HCT116 (cell line): ENCODE measurements at regions of chr1 and their contacts with region 1.

Region 1: DNA sequence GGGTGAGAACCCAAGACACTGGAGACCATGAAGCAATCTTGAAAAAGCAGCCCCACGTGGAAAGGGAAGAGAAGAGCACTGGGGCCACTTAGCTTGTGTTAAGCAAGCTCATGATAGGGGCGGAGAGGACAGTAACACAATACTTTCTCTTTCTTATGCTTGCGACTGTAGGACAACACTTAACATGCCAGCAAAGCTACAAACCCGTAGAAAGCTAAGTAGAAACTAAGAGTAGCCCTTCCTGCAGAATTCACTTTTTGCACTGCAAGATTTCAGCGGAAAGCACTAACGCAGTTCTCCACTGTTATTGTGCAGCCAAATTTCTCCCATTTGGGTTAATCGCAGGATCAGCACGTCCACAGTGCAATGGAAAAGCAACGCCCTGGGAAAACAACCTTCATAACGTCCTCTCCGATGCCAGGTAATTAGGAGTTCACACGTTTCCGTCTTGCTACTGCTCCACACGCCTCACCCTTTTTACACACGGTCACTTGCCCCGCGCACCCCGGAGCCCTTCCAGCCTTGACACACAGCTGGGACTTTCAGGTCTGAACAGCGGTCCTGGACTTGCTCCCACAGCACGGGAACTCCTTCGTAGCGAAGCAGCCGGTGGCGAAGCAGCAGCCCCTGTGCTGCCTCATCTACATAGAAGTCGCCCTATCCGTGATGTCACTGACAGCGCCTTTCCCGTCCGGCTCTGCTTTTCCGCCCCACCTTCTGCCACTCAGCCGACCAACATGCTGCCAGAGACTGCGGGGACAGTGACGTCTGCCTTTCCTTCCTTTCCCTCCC is 148.6 kb downstream of the PPIAL4G start:
- DNase-seq: peak; percentile 98
- ATAC-seq: peak; percentile 88
- H3K4me3 ChIP-seq: peak overlapping the region; percentile 50 to 56
- H3K27ac ChIP-seq: peak overlapping the region; percentile 89
- H3K4me1 ChIP-seq: peaks cover 9 to 27% of the 10 kb centered on the region in 2 experiments
- H3K27me3 ChIP-seq: no peaks in the 10 kb centered on the region
- CTCF ChIP-seq: no peak
- POLR2A ChIP-seq: peak; percentile 100
- RAD21 ChIP-seq: peak; percentile 41

Region 2: GRCh38 chr1:148263128-148263905 is 71.2 kb before region 1 on chr1:
- CTCF ChIA-PET with region 1: interaction called, 5 read pairs
- POLR2A ChIA-PET with region 1: interaction called, 366 read pairs
- RAD21 ChIA-PET with region 1: interaction called in 1 of 2 experiments, 3 read pairs
- intact Hi-C with region 1: loop called (anchors 1 kb)
- DNase-seq: peak; percentile 99
- ATAC-seq: peak; percentile 72
- H3K4me3 ChIP-seq: peak overlapping the region; percentile 41 to 59
- H3K27ac ChIP-seq: peak overlapping the region; percentile 78
- H3K4me1 ChIP-seq: peaks cover 4 to 33% of the 10 kb centered on the region in 2 experiments; a peak in 3 of 4 replicates
- H3K27me3 ChIP-seq: no peaks in the 10 kb centered on the region
- CTCF ChIP-seq: no peak
- POLR2A ChIP-seq: peak; percentile 100
- RAD21 ChIP-seq: peak; percentile 34; the same call in 1 of the 2 replicates

Region 3: DNA sequence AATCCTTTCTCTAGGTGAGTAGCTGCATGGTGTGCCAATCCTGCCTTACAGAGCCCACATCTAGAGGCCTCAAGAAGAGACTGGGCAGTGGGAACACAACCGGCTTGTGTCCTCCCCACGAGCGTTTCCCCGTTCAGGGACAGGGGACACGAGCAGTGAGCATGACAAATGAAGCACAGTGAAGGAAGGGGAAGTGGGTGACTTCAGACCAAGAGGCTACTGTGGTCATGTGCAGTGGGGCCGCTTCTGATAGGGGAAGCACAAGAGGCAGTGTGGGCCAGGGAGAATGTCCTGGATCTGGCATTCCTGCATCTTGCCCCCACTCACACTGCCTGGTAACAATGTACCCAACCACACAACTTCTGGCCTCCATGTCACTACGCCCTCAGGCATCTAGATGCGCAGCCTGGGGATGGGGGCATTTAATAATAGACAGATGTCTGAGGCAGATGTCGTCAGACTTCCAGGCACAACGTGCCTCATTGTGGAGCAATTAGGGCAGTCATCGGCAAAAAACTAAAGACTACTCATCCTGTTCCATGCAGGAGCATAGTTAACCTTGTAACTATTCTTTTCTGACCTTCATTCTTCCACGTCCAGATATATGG is 26.8 kb before region 1 on chr1:
- CTCF ChIA-PET with region 1: no interaction called
- POLR2A ChIA-PET with region 1: interaction called, 13 read pairs
- RAD21 ChIA-PET with region 1: no interaction called
- intact Hi-C with region 1: no loop called
- DNase-seq: no peak
- ATAC-seq: no peak
- H3K4me3 ChIP-seq: no peak overlapping the region
- H3K27ac ChIP-seq: no peak overlapping the region
- H3K4me1 ChIP-seq: peaks cover 0 to 8% of the 10 kb centered on the region in 2 experiments; a peak in 1 of 4 replicates
- H3K27me3 ChIP-seq: no peaks in the 10 kb centered on the region
- CTCF ChIP-seq: no peak
- POLR2A ChIP-seq: no peak
- RAD21 ChIP-seq: no peak

Region 4: DNA sequence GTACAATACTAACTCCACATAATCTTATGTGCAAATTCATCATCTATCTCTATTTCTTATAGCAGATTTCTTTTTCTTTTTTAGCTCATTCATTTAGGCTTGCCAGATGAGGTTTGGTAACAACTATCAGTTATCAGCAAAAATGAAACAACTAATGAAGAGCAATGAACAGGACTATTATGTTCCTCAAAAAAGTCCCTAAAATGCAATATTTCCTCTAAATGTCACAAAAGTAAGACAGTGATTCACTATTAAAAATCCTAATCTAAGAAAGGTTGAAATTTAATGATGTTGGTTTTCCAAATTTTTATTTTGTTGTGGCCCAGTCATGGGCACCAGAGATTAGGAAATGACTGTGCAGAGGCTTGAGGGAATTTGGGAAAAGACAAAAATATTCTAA is 13.2 kb after region 1 on chr1:
- CTCF ChIA-PET with region 1: no interaction called
- POLR2A ChIA-PET with region 1: interaction called, 17 read pairs
- RAD21 ChIA-PET with region 1: no interaction called
- intact Hi-C with region 1: no loop called
- DNase-seq: no peak
- ATAC-seq: no peak
- H3K4me3 ChIP-seq: no peak overlapping the region
- H3K27ac ChIP-seq: no peak overlapping the region
- H3K4me1 ChIP-seq: peaks cover 0 to 8% of the 10 kb centered on the region in 2 experiments; a peak in 2 of 4 replicates
- H3K27me3 ChIP-seq: no peaks in the 10 kb centered on the region
- CTCF ChIP-seq: no peak
- POLR2A ChIP-seq: no peak
- RAD21 ChIP-seq: no peak

Region 5: DNA sequence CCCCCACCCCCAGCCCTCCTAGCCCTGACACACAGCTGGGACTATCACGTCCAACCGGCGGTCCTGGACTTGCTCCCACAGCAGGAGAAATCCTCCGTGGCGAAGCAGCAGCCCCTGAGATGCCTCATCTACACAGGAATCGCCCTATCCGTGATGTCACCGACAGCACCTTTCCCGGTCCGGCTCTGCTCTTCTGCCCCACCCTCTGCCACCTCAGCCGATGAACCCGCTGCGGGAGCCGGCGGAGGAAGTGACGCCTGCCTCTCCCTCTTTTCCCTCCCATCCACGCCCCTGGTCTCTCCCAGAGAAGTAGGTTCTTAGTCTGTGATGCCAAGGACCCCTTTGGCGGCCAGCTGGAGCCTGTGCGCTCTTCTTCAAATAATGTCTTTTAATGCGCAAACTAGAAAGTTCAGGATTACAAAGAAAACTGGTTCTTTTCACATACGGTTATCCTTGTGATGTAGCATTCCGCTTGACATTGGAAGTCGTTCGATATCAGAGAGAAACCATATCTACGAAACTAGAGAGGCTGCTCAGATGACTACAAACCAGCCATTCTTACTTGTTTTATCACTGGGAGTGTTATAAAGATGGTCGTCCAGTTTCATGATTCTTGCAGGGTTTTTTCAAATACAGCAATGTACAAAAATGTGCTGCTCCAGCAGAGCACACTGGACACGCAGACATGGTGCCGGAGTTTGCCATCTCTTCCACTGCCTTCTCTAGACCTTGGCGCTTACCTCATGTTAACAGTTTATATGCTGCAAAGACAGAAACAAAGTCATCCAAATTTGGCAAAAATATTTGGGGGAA is 28.3 kb after region 1 on chr1:
- CTCF ChIA-PET with region 1: no interaction called
- POLR2A ChIA-PET with region 1: interaction called, 17 read pairs
- RAD21 ChIA-PET with region 1: no interaction called
- intact Hi-C with region 1: loop called (anchors 2 kb)
- DNase-seq: peak; percentile 86
- ATAC-seq: peak; percentile 92
- H3K4me3 ChIP-seq: peak overlapping the region; percentile 40 to 54
- H3K27ac ChIP-seq: no peak overlapping the region
- H3K4me1 ChIP-seq: peaks cover 9 to 50% of the 10 kb centered on the region in 2 experiments
- H3K27me3 ChIP-seq: no peaks in the 10 kb centered on the region
- CTCF ChIP-seq: no peak
- POLR2A ChIP-seq: no peak
- RAD21 ChIP-seq: no peak